ENCODE measurements at regions of chr2 and their contacts with region 1.

Region 1: DNA sequence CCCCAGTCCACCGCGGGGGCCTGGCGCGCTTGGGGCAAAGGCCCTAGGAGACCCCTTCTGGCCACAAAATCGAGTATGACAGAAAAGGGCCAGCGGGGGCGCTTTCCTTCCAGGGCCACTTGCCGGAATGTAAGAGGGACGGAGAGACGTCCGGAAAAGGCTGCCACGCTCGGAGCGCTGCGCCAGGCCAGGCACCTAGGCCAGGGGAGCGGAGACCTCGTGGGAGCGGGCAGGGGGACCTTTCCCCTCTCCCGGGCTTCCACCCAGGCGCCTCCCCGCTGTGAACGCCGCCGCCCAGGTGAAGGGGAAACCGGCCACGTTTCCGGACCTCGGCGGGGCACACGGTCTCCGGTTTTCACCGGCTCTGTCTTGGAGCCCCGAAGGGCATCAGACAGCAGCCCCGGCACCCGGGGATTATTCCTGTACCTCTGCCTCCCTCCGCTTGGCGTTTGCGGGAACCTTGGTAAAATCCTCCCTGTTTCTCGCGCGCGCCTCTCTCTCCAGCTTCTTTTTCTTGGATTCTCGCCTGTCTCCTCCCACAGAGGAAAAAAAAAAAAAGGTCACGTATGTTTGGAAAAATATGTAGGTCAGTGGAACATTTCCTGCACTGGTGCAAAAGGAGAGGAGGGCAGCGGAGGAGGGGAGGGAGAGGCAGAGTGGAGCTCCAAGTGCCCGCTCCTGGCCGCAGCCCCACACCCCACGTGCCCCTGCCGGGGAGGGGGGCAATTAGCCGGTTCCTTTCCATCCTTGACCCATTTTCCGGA is 1.2 kb upstream of the NPAS2 start:
- DNase-seq: peak; percentile 76
- H3K4me3 ChIP-seq: peak overlapping the region; percentile 51 to 89 (median 77)
- H3K27ac ChIP-seq: peak overlapping the region; percentile 93
- H3K4me1 ChIP-seq: peaks cover 28% of the 10 kb centered on the region
- H3K27me3 ChIP-seq: no peaks in the 10 kb centered on the region
- CTCF ChIP-seq: peak in 1 of 2 donors; percentile 35

Region 2: DNA sequence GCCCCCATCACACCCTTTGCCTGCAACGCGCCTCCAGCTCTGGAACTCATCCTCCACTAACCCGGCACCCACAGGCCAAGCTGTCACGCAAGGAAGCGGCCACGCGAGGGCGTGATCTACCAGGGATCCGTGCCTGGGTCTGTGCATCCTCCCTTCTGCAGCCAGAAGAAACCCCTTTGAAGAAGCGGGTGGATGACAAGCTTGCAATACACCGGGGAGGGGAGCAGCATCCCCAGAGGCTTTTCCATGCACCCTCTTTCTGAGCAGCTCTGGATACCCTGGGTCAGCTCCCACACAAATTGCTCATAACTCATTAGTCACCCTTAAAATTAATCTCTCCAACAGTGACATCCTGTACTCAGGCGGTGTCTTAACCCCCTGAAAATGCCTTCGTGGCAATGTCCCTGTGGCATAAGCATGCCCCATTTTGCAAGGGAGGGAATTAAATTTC is 208.4 kb before region 1 on chr2:
- CTCF ChIA-PET with region 1: no interaction called
- dilution Hi-C with region 1: no loop called
- in situ Hi-C with region 1: no loop called
- intact Hi-C with region 1: loop called (anchors 10 kb)
- DNase-seq: peak; percentile 37
- H3K4me3 ChIP-seq: no peak overlapping the region
- H3K27ac ChIP-seq: no peak overlapping the region
- H3K4me1 ChIP-seq: no peaks in the 10 kb centered on the region
- H3K27me3 ChIP-seq: no peaks in the 10 kb centered on the region
- CTCF ChIP-seq: peak; percentile 50 to 75

Region 3: DNA sequence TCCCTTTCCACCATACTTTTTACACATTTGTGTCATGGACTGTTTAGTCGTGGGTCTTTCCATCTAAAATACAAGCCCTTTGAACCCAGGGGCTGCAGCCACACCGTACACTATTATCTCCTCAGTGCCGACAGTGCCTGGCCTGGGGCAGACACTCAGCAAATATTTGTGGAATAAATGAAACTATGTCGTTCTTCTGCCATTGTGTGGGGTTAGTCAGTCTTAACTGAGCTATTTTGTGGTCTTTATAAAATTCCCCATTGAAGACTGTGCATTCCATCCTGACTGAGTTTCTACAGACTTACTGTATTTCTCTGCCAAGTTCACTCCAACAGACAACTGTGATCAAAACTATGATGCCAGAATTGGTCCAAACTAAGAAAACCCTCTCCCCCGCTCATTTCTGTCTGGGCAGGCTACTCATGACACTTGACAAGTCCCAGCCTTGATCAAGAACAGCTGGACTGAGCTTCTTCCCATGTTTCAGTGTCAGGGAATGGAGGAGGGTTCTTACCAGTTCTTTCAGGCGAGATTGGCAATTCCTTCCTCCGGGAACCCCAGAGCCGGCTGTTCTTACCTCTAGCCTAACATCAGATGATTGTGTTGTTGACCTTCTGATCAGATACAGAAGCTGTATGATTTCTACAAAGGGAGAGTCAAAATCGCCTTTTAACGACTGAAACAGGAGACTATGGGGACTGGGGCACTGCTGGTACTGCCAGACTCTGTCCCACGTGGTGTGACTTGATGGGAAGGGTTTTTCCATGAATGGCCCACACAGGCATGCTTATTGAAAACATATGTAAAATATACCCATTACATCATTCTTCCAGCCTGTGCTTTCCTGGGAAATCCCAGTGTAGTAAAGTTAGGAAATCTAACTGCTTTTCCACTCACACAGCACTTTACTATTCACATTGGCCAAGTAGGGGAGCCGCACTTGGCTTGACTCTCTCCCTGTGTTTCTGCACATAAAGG is 76.2 kb before region 1 on chr2:
- CTCF ChIA-PET with region 1: interaction called, 4 read pairs
- dilution Hi-C with region 1: no loop called
- in situ Hi-C with region 1: no loop called
- intact Hi-C with region 1: loop called (anchors 1 kb)
- DNase-seq: peak; percentile 96
- H3K4me3 ChIP-seq: no peak overlapping the region
- H3K27ac ChIP-seq: peak overlapping the region; percentile 93
- H3K4me1 ChIP-seq: peaks cover 43% of the 10 kb centered on the region
- H3K27me3 ChIP-seq: no peaks in the 10 kb centered on the region
- CTCF ChIP-seq: no peak

Region 4: DNA sequence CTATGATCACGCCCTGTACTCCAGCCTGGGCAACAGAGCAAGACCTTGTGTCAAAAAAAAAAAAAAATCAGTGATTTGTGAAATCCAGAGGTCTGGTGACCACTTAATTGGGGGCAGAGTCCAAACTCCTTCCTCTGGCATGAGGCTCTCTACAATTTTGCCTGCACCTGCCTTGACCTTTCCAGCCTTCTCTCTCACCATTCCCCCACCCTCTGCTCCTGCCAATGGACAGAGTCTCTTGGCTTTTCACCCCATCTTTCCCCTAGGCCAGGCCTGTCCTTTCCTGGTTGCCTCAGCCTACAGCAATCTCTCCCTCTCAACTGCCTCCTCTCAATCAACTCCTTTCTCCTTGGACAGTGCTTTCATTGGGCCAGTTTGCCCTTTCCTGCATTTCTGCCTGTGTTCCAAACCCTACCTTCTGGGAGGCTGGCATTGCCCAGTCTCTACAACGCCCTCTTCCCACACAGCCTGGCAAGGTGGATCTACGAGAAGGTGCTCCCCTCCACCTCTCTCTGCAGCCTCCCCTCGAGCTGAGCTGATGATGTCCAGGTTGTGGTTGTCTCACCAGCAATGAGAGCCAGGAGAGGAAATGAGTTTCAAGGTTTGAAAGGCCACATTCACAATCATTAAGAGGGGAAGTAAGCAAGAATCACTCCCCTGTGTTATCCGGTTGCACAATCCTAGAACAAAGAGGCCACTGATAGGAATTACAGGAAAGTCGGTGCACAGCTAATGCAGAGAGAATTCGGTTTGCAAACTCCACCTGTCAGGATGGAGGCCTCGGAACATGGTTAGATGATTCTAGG is 38.4 kb before region 1 on chr2:
- CTCF ChIA-PET with region 1: no interaction called
- dilution Hi-C with region 1: no loop called
- in situ Hi-C with region 1: no loop called
- intact Hi-C with region 1: loop called (anchors 1 kb)
- DNase-seq: peak; percentile 98
- H3K4me3 ChIP-seq: no peak overlapping the region
- H3K27ac ChIP-seq: peak overlapping the region; percentile 89
- H3K4me1 ChIP-seq: peaks cover 50% of the 10 kb centered on the region
- H3K27me3 ChIP-seq: no peaks in the 10 kb centered on the region
- CTCF ChIP-seq: peak in 1 of 2 donors; percentile 9

Region 5: GRCh38 chr2:100800915-100801314 is 17.9 kb before region 1 on chr2:
- CTCF ChIA-PET with region 1: no interaction called
- dilution Hi-C with region 1: no loop called
- in situ Hi-C with region 1: no loop called
- intact Hi-C with region 1: loop called (anchors 1 kb)
- DNase-seq: no peak
- H3K4me3 ChIP-seq: no peak overlapping the region
- H3K27ac ChIP-seq: peak overlapping the region; percentile 95
- H3K4me1 ChIP-seq: peaks cover 36% of the 10 kb centered on the region
- H3K27me3 ChIP-seq: no peaks in the 10 kb centered on the region
- CTCF ChIP-seq: no peak

Region 6: DNA sequence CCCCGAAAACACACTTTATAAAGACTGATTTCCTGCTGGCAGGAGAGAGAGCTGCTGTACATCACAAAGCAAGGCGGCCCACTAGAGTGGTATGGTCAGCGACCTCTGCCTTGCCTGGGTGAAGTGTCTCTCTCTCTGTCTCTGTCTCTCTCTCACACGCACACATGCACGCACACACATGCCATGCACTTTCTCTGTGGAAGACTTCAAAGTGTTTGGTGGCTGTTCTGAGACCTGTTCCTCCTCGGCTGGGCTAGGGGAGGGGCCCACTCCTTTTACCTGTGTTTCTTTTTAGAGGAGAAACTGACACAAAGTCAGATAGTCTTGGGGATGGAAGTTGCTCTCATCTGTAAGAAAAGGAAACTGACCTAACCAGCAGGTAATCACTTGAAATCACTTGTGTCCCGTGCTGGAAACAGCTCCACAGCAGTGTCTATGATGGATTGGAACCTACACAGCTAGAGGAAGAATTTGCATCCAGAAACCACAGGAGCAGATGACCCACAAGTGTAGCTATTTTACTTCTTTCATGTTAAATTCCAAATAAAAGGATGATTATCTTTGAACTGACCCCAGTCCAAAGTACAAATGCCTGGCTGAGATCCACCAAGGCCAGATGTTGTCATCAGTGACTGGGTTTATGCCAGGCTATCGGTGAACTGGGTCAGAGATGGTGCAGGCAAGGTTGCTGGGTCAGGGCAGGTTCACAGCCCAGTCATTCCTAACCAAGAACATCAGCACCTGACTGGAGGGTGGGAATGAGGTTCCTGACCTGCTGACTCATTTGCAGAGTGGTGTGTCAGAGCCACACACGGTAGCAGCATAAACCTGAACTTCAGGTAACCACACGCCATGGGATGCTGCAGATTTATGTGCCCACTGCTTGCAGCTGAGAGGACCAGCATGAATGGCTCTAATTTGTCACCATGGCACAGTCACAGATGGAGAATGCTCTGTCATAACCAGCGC is 64.1 kb after region 1 on chr2:
- CTCF ChIA-PET with region 1: no interaction called
- dilution Hi-C with region 1: no loop called
- in situ Hi-C with region 1: no loop called
- intact Hi-C with region 1: loop called (anchors 5 kb)
- DNase-seq: peak; percentile 91
- H3K4me3 ChIP-seq: no peak overlapping the region
- H3K27ac ChIP-seq: peak overlapping the region; percentile 3
- H3K4me1 ChIP-seq: peaks cover 19% of the 10 kb centered on the region
- H3K27me3 ChIP-seq: no peaks in the 10 kb centered on the region
- CTCF ChIP-seq: no peak

Region 7: DNA sequence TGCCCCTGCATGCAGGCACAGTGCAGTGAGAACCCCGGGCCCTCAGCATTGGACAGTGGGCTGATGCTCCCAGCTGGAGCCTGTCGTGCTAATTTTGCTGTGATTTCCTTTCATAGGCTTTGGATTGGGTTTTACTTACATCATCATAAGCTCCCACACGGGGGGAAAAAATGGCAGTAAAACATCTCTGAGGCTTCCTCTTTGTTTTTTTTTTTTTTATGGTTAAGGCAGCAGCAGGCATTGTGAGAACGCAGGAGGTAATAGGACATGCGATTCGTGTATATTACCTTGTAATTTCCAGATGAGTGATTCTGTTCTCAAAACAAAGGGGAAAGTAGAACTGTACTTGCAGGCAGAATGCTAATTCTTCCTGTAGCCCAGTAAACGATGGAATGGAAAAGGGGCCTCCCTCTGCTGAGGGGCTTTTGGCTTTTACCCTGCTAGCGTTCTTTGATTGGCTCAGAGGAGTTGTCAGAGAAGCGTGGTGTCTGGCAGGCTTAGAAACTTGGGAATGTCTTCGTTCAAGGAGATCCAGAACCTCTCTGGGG is 90.8 kb after region 1 on chr2:
- CTCF ChIA-PET with region 1: no interaction called
- dilution Hi-C with region 1: no loop called
- in situ Hi-C with region 1: no loop called
- intact Hi-C with region 1: no loop called
- DNase-seq: no peak
- H3K4me3 ChIP-seq: no peak overlapping the region
- H3K27ac ChIP-seq: no peak overlapping the region
- H3K4me1 ChIP-seq: peaks cover 5% of the 10 kb centered on the region
- H3K27me3 ChIP-seq: no peaks in the 10 kb centered on the region
- CTCF ChIP-seq: no peak

Region 8: DNA sequence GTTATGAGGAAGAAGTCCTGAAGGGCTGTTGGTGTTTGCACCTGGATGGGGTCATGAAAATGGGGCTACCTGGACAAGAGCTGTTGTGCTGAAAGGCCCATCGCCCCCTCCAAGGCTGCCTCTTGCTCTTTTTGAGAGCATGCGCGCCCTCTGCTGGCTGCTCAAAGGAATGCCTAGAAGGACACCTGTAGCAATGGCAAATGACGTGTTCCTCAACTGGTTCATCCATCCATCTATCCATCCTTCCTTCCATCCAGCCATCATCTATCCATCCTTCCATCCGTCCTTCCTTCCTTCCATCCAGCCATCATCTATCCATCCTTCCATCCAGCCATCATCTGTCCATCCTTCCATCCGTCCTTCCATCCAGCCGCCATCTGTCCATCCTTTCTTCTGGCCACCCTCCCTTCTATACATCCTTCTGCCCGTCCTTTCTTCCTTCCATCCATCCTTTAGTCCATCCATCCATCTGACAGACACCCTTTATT is 166.1 kb after region 1 on chr2:
- CTCF ChIA-PET with region 1: no interaction called
- dilution Hi-C with region 1: no loop called
- in situ Hi-C with region 1: no loop called
- intact Hi-C with region 1: loop called (anchors 2 kb)
- DNase-seq: peak; percentile 47
- H3K4me3 ChIP-seq: no peak overlapping the region
- H3K27ac ChIP-seq: no peak overlapping the region
- H3K4me1 ChIP-seq: no peaks in the 10 kb centered on the region
- H3K27me3 ChIP-seq: no peaks in the 10 kb centered on the region
- CTCF ChIP-seq: peak; percentile 83 to 88

Region 9: DNA sequence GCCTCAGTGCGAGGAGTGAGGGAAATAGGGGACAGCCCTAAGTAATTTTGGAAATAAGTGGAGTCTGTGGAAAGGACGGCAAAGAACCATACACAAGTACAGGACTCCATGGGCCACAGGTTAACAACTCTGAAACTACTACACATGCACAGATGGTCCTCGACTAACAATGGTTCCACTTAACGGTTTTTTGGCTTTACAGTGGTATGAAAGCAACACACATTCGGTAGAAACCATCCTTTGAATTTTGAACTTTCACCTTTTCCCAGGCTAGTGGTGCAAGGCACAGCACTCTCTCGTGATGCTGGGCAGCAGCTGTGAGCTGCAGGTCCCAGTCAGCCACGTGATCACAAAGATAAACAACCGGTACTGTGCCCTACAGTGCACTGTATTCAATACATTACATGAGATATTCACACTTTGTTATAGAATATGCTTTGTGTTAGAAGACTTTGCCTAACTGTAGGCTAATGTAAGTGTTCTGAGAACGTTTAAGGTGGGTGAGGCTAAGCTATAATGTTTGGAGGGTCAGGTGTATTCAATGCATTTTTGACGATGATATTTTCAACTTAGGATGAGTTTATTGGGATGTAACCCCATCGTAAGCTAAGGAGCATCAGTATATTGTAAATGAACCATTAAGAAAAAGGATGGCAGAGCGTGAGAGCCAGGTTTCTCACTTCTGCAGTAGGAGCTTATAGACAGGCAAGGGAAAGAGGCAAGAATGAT is 287.8 kb after region 1 on chr2:
- CTCF ChIA-PET with region 1: no interaction called
- dilution Hi-C with region 1: no loop called
- in situ Hi-C with region 1: no loop called
- intact Hi-C with region 1: no loop called
- DNase-seq: no peak
- H3K4me3 ChIP-seq: no peak overlapping the region
- H3K27ac ChIP-seq: no peak overlapping the region
- H3K4me1 ChIP-seq: peaks cover 7% of the 10 kb centered on the region
- H3K27me3 ChIP-seq: no peaks in the 10 kb centered on the region
- CTCF ChIP-seq: no peak